Endothelial cell of umbilical vein (primary cell): ENCODE measurements at regions of chr2 and their contacts with region 1.

Region 1: DNA sequence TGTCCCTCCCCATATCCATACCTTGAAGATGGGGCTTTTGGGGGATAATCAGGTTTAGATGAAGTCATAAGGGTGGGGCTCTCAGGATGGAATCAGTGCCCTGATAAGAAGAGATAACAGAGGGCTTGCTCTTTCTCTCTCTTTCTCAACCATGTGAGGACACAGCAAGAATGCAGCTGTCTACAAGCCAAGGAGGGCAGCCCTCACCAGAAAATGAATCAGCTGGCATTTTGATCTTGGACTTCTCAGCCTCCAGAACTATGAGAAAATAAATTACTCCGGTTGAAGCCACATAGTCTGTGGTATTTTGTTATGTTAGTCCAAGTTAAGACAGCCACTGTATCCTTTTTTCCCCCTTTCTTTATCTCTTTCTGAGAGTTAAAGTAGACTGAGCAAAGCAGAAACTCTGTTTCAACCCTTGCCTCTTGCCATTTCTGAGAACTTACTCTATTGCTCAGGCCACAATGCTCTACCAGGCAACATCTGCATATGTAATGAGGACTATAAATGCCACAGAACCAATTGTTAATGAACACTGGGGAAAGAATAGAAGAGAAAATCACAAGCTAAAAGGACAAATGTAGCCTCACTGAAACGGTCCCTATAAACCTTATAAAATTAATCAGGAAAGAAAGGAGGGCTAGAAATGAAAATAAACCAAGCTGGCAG is 56.9 kb downstream of the SRBD1 start:
- DNase-seq: no peak
- H3K4me3 ChIP-seq: no peak overlapping the region
- H3K27ac ChIP-seq: no peak overlapping the region
- H3K4me1 ChIP-seq: no peaks in the 10 kb centered on the region
- H3K27me3 ChIP-seq: no peaks in the 10 kb centered on the region
- CTCF ChIP-seq: no peak
- POLR2A ChIP-seq: no peak

Region 2: GRCh38 chr2:44205169-44205568 is 1349.0 kb before region 1 on chr2:
- CTCF ChIA-PET with region 1: no interaction called
- POLR2A ChIA-PET with region 1: no interaction called
- dilution Hi-C with region 1: no loop called
- intact Hi-C with region 1: loop called (anchors 5 kb)
- DNase-seq: no peak
- H3K4me3 ChIP-seq: no peak overlapping the region
- H3K27ac ChIP-seq: no peak overlapping the region
- H3K4me1 ChIP-seq: no peaks in the 10 kb centered on the region
- H3K27me3 ChIP-seq: no peaks in the 10 kb centered on the region
- CTCF ChIP-seq: no peak
- POLR2A ChIP-seq: no peak

Region 3: DNA sequence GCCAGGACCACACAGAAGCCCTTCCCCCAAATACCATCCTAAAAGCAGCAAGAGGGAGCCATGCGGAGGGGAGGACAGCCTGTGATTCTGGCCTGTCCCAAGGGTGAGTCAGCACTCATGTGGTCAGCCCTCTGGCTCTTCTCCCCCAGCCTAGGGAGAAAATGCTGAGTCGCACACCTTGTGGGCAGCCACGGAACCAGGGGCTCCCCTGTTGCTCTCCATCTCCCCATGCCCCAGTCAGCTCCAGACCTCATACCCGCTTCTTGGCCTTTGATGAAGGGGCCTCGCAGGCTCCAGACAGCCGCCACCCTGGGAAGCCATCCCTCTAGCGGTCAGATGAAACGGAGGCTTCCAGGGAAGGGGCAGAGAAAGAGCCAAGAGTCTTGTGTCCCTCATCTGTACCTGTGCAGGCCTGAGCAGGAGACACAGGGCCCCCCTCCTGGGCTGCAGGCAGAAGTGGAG is 363.7 kb before region 1 on chr2:
- CTCF ChIA-PET with region 1: no interaction called
- POLR2A ChIA-PET with region 1: no interaction called
- dilution Hi-C with region 1: no loop called
- intact Hi-C with region 1: no loop called
- DNase-seq: no peak
- H3K4me3 ChIP-seq: no peak overlapping the region
- H3K27ac ChIP-seq: no peak overlapping the region
- H3K4me1 ChIP-seq: no peaks in the 10 kb centered on the region
- H3K27me3 ChIP-seq: peaks cover 0 to 3% of the 10 kb centered on the region in 2 experiments
- CTCF ChIP-seq: no peak
- POLR2A ChIP-seq: no peak

Region 4: DNA sequence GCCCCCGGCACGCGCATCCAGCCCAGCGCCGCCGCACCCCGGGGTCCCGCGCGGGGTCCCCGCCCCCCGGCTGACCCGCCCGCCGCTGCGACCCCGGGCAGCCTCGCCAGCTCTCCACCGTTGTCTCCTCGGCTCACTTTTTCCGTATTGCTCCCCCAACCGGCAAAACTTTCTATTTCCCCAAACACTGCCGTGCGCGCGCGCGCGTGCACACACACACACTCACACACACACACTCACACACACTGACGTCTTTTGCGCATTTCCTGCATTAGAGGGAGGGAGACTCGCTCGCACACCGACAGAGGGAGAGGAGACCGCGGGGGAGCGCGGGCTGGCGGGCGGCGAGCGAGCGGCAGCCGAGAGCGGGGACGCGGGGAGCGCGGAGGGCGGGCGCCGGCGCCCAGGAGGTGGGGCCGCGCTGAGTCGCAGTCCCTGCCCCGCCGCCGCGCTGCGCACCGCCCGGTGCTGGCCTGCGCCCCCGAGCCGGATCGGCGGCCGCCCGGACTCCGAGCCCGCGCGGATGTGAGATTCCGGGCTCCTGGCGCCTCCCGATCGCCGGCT is 96.7 kb after region 1 on chr2:
- CTCF ChIA-PET with region 1: no interaction called
- POLR2A ChIA-PET with region 1: no interaction called
- dilution Hi-C with region 1: no loop called
- intact Hi-C with region 1: no loop called
- DNase-seq: peak; percentile 96
- H3K4me3 ChIP-seq: peak overlapping the region; percentile 81 to 98 (median 88)
- H3K27ac ChIP-seq: peak overlapping the region; percentile 76
- H3K4me1 ChIP-seq: peaks cover 16% of the 10 kb centered on the region
- H3K27me3 ChIP-seq: no peaks in the 10 kb centered on the region
- CTCF ChIP-seq: peak; percentile 35 to 49
- POLR2A ChIP-seq: peak; percentile 86

Region 5: GRCh38 chr2:45986519-45986918 is 432.3 kb after region 1 on chr2:
- CTCF ChIA-PET with region 1: no interaction called
- POLR2A ChIA-PET with region 1: no interaction called
- dilution Hi-C with region 1: no loop called
- intact Hi-C with region 1: no loop called
- DNase-seq: no peak
- H3K4me3 ChIP-seq: no peak overlapping the region
- H3K27ac ChIP-seq: no peak overlapping the region
- H3K4me1 ChIP-seq: peaks cover 8% of the 10 kb centered on the region
- H3K27me3 ChIP-seq: no peaks in the 10 kb centered on the region
- CTCF ChIP-seq: no peak
- POLR2A ChIP-seq: no peak